Cardiac septum (tissue), 1 donor: ENCODE measurements at regions of chr1 and their contacts with region 1.

Region 1: DNA sequence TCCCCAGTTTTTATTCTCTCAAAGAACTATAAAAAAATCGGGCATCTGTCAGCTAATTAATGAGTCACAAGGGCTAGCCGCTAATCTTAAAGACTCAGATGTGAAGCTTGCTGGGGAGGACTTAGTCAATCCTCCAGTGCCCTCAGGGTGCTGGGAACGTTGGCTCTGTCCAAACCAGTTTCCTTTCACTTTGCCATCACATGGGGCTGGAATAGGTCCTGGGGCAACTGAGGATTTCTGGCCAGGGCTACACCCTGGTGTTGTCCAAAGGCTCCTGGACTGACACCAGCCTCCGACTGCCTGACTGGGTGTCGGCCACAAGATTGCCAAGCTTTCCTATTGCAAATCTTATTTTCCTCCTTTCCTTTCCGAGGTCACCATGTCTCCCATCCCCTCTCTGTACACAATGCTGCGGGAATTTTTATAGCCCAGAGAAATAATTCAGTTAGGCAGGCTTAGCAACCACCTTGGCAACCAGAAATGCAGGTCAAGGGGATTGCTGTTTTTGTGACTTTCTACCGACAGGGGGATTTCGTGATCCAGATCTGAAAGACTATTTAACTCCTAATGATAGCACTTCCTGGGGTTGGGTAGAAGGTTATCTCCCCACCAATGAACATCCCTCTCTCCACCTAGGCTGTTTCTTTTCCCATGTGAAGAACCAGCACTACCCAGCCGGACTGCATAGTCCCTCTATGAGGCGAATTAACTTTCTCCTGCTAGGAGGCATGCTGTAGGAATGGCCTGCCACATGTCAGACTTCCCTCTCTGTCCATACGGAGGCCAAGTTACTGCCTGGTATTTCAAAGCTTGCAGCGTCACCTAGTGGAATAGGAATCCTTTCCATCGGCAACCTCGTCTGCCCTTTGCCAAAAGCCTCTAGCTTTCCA is 29.9 kb upstream of the CTBS start:
- DNase-seq: no peak

Region 2: DNA sequence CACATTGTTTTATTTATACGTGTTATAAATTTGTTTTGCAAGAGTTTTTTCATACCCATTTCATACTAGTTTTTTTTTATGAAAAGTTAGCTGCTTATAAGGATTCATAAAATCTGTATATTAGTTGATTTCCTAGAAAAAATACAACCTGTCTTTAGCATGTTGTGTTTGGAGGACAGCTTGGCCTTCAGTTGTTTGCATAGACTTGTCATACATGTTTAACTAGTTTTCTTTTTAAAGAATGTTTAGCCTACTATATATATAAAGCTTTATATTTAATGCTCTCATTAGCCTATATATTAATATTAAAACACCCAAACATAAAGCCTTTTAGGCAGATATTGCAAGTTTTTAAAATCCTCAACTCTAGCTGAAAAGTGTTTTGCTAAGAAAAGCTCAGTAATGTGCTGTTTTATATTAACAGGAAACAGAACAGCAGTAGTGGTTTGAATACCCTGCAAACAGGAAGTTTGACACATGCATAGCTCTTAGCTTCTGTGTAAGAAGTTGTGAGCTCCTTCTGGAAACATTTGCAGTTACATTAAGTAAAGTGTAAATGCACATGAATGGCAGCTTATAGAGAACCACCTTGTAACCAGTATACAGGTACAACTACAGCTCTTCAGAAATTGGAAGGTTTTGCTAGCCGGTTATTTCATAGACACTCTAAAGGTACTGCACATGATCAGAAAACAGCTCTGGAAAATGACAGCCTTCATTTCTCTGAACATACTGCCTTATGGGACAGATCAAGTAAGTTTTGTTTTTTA is 460.2 kb before region 1 on chr1 and contains the start of gene PRKACB:
- intact Hi-C with region 1: loop called (anchors 5 kb)
- DNase-seq: no peak
- total RNA-seq, gene PRKACB: 41.8 TPM

Region 3: GRCh38 chr1:84298328-84298683 is 305.9 kb before region 1 on chr1:
- intact Hi-C with region 1: loop called (anchors 10 kb)
- DNase-seq: peak; percentile 78

Region 4: DNA sequence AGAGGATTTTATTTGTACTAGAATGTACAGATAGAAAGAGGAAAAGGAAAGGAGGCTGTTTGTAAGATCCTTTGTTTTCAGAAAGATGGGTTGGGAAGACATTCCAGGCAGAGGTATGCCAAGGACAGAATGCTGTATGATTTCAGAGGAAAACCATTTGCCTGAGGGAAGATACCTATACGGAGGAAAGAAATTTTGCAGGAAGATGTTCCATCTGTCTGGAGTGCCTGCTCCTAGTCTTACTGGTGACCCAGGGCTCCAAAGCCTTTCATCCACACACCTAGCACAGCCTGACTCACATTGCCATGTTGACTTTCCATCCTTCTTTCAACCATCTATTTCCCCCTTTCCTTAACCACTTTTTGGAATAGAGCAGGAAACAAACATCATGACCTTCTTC is 284.5 kb before region 1 on chr1:
- intact Hi-C with region 1: no loop called
- DNase-seq: no peak

Region 5: DNA sequence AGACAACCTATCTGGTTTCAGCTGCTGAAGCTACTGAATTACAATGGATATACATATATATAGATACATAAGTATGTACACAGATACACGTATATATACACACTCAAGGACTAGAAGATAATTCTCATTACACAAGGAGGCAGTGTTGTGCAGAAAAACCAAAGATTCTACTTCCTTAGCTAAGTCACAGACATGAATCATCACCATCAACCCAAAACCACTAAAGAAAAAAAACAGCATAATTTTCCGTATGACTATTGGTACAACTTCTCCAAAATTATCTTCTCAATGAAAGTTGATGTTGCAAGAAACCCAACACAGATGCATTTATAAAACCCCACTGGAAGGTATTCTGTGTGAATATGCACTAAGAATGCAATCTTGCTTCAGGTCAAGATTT is 161.9 kb before region 1 on chr1:
- intact Hi-C with region 1: loop called (anchors 2 kb)
- DNase-seq: no peak

Region 6: GRCh38 chr1:84506002-84506728 is 98.0 kb before region 1 on chr1 and contains the starts of genes GNG5 and SPATA1:
- intact Hi-C with region 1: loop called (anchors 5 kb)
- DNase-seq: peak; percentile 100
- total RNA-seq, gene GNG5: 133 TPM
- total RNA-seq, gene SPATA1: 1.2 TPM

Region 7: DNA sequence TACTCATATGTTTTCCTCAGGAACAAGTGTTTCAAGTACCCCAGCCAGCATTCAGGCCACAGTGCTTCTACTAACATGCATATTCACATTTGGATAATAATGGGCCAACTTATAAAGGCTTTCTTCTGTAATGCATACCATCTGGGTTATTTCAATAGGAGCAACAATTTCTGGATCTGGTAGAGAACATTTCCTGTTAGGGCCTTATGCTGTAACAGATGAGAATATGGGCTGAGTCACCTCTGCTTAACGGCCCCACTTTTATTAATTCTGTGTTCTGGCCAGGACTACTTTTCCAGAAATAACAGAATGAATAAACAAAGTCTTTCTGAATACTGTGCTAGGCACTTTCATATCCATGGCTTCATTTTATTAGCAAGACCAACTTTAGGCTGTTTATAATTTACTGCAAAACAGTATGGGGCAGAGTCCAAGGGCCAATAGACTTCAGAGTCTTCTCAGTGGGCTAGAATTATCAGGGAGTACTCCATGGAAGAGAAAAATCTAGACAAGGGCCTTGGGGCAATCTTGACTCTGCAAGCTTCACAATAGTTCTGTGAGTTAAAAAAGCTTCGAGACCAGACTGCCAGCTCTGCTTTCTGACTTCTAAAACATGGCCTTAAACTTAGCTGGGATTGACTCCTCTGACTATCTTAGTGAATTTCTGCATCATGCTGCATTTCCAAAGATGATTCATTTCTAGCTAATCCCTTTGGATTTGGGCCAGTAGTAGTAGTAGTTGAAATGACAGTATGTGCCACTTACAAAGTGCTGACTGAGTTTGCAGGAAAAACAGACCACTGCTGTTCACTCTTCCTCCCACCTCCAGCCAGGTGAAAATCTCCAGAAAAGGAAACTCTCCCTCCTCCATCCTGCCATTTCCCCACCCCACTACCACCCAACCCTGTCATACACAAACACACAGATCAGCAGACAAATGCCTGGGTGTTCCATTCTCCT is 94.2 kb after region 1 on chr1:
- intact Hi-C with region 1: no loop called
- DNase-seq: no peak

Region 8: DNA sequence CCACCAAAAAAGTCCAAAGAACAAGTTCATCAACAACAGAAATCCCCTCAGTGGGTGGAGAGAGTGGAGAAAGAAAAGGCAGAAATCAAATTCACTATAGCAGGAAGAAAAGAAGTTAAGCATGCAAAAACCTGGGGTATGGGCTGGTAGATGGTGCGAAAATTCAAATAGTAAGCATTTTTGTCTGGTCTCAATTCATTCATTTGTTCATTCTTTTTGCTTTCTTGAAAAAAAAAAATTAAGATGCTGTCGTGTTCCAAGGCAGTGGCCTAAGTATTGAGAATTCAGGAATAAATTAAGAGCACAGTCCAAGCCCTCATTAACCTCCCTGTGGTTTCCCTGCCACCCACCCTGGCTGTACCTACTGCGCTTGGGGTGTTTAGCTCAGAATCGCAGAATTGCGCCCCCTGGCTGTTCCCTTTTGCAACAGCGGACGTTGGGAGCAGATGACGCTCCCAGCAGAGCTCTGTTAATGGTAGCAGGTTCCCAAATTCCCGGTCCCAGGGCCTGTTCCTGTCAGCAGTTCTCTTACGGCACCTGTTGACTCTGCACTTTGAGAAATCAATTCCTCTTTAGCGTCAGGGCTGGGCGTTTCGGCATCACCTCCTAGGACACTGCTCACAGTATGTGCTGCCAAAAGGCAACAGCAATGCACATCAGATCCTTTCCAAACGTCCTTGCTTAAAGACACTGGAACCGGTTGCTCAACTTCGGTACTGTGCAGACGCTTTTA is 120.1 kb after region 1 on chr1:
- intact Hi-C with region 1: no loop called
- DNase-seq: no peak